ENCODE measurements at regions of chr1 and their contacts with region 1.

Region 1: GRCh38 chr1:27284425-27285273 is 37.3 kb upstream of the TMEM222 start:
- DNase-seq: peak; percentile 95
- ATAC-seq: peak; percentile 93
- H3K4me3 Mint-ChIP-seq: no peak overlapping the region
- H3K27ac Mint-ChIP-seq: peak overlapping the region; percentile 37
- H3K4me1 Mint-ChIP-seq: peaks cover 2% of the 10 kb centered on the region
- H3K27me3 Mint-ChIP-seq: no peaks in the 10 kb centered on the region

Region 2: DNA sequence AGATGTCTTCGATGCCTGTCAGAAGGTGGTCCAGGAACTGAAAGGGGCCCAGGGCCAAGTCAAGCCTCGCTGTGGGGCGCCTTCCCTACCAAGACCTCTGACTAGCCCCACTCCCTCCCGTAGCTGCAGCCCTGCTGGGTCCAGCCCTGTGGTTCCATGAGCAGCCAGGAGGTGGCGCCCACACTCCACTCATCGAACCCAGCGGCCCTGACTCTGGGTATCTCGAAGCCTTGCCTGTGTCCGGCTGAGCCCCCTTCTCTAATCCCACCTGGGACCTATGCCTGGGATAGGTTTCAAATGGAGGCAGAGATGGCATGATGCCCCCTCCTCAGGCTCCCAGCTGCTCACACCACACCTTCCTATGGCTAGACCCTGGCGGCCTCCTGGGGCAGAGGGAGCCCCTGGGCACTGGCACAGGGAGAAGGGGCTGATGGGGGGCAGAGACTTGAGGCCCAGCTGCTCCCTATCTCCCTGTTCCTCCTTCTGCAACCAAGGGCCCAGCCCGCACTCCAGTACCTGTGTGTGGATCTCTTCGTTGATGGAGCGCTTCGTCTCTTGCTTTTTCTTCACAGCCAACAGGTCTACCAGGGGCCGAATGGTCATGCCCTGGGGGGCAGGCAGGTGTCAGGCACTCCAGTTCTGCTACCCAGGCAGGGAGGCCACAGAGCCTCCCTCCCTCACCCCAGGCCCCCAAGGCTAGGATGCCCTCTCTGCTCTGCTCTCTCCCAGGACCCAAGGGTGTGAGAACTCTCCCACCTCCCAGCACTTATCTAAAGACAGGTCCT is 181.8 kb before region 1 on chr1:
- CTCF ChIA-PET with region 1: interaction called, 75 read pairs
- POLR2A ChIA-PET with region 1: no interaction called
- intact Hi-C with region 1: loop called (anchors 1 kb)
- DNase-seq: peak; percentile 89
- ATAC-seq: peak; percentile 75
- H3K4me3 Mint-ChIP-seq: no peak overlapping the region
- H3K27ac Mint-ChIP-seq: no peak overlapping the region
- H3K4me1 Mint-ChIP-seq: peaks cover 23% of the 10 kb centered on the region
- H3K27me3 Mint-ChIP-seq: no peaks in the 10 kb centered on the region

Region 3: GRCh38 chr1:27192039-27192529 is 92.6 kb before region 1 on chr1:
- CTCF ChIA-PET with region 1: interaction called, 51 read pairs
- POLR2A ChIA-PET with region 1: no interaction called
- intact Hi-C with region 1: no loop called
- DNase-seq: no peak
- ATAC-seq: no peak
- H3K4me3 Mint-ChIP-seq: no peak overlapping the region
- H3K27ac Mint-ChIP-seq: no peak overlapping the region
- H3K4me1 Mint-ChIP-seq: no peaks in the 10 kb centered on the region
- H3K27me3 Mint-ChIP-seq: no peaks in the 10 kb centered on the region

Region 4: GRCh38 chr1:27203946-27204345 is 80.7 kb before region 1 on chr1:
- CTCF ChIA-PET with region 1: interaction called, 51 read pairs
- POLR2A ChIA-PET with region 1: no interaction called
- intact Hi-C with region 1: no loop called
- DNase-seq: no peak
- ATAC-seq: no peak
- H3K4me3 Mint-ChIP-seq: no peak overlapping the region
- H3K27ac Mint-ChIP-seq: no peak overlapping the region
- H3K4me1 Mint-ChIP-seq: no peaks in the 10 kb centered on the region
- H3K27me3 Mint-ChIP-seq: no peaks in the 10 kb centered on the region

Region 5: GRCh38 chr1:27267153-27267552 is 17.5 kb before region 1 on chr1:
- CTCF ChIA-PET with region 1: interaction called, 13 read pairs
- POLR2A ChIA-PET with region 1: no interaction called
- intact Hi-C with region 1: no loop called
- DNase-seq: no peak
- ATAC-seq: no peak
- H3K4me3 Mint-ChIP-seq: no peak overlapping the region
- H3K27ac Mint-ChIP-seq: no peak overlapping the region
- H3K4me1 Mint-ChIP-seq: peaks cover 3% of the 10 kb centered on the region
- H3K27me3 Mint-ChIP-seq: no peaks in the 10 kb centered on the region

Region 6: GRCh38 chr1:27300341-27301051 is 15.8 kb after region 1 on chr1:
- CTCF ChIA-PET with region 1: interaction called, 76 read pairs
- POLR2A ChIA-PET with region 1: no interaction called
- intact Hi-C with region 1: no loop called
- DNase-seq: peak; percentile 86
- ATAC-seq: peak; percentile 92
- H3K4me3 Mint-ChIP-seq: no peak overlapping the region
- H3K27ac Mint-ChIP-seq: no peak overlapping the region
- H3K4me1 Mint-ChIP-seq: no peaks in the 10 kb centered on the region
- H3K27me3 Mint-ChIP-seq: no peaks in the 10 kb centered on the region